Aorta (tissue), 5 donors: ENCODE measurements at regions of chr6 and their contacts with region 1.

Region 1: GRCh38 chr6:43506667-43507471 is 3.3 kb downstream of the LRRC73 start:
- DNase-seq: peak; percentile 74 to 90
- ATAC-seq: peak; percentile 76
- H3K4me3 ChIP-seq: no peak overlapping the region
- H3K27ac ChIP-seq: no peak overlapping the region
- H3K4me1 ChIP-seq: no peaks in the 10 kb centered on the region
- H3K27me3 ChIP-seq: no peaks in the 10 kb centered on the region

Region 2: DNA sequence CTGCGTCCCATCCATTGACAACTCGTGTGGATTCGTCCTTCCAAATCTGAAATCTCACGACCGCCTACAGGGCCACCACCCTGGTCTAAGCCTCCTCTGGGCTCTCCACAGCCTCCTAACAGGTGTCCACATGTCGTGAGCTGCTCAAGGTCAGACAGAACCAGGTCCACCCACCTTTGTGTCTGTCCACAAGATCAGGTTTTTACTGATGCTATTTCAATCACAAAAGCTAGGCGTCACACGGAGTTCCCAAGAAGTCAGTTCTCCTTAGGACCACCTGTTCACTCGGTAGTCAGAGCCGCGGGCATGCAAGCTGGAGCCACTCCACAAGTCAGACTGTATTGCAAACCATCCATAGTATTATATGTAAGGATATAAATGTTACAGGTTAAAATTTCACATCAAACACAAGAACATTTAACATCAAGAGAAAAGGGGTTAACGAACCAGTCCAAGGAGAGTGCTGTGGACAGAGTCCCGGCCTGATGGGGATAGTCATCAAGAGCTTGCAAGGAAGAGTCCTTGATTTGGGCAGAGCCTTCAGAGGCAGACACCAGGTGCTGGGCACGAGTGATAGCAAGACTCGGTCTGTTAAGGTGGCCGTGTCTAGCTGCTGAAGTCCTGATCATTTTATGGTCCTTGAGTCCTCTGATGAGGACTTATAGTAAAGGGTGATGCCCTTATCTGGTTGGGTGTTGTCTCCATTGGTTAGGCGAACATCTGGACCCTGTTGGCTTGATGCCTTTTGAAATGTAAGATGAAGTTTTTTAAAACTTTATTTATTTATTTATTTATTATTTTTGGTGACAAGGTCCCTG is 276.9 kb before region 1 on chr6:
- intact Hi-C with region 1: loop called in 1 of 2 experiments (anchors 10 kb)
- DNase-seq: no peak
- ATAC-seq: no peak
- H3K4me3 ChIP-seq: no peak overlapping the region
- H3K27ac ChIP-seq: no peak overlapping the region
- H3K4me1 ChIP-seq: no peaks in the 10 kb centered on the region
- H3K27me3 ChIP-seq: no peaks in the 10 kb centered on the region

Region 3: GRCh38 chr6:43369174-43370022 is 137.5 kb before region 1 on chr6 and contains the start of gene ZNF318:
- intact Hi-C with region 1: loop called (anchors 5 kb)
- DNase-seq: peak; percentile 98
- ATAC-seq: peak; percentile 99
- H3K4me3 ChIP-seq: peak within 1 kb of the TSS; percentile 94 to 100
- H3K27ac ChIP-seq: peak within 1 kb of the TSS; percentile 52 to 71
- H3K4me1 ChIP-seq: peaks cover 0 to 3% of the 10 kb centered on the region in 2 donors
- H3K27me3 ChIP-seq: no peaks in the 10 kb centered on the region
- total RNA-seq, gene ZNF318: 12.1 to 21.3 TPM

Region 4: DNA sequence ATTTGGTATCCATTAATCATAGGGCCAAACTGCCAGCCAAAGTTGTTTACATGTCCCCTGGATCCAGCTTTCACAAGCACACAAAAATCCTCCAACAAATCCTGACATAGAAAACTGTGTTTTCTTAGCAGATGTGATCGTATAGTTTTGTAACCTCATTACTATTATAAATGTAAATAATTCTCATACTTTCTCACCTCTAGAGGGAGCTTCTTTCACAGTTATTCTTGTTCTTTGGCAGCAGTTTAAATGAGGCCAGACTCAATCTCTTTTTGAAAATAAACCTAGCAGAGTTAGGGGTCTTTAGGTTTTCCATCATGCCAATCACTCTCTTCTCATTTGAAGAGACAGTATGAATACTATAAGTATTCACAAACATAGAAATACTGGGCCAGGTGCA is 120.4 kb before region 1 on chr6:
- intact Hi-C with region 1: loop called (anchors 2 to 10 kb)
- DNase-seq: no peak
- ATAC-seq: no peak
- H3K4me3 ChIP-seq: no peak overlapping the region
- H3K27ac ChIP-seq: no peak overlapping the region
- H3K4me1 ChIP-seq: no peaks in the 10 kb centered on the region
- H3K27me3 ChIP-seq: no peaks in the 10 kb centered on the region

Region 5: GRCh38 chr6:43391440-43392031 is 115.3 kb before region 1 on chr6:
- intact Hi-C with region 1: loop called (anchors 2 to 10 kb)
- DNase-seq: no peak
- ATAC-seq: no peak
- H3K4me3 ChIP-seq: no peak overlapping the region
- H3K27ac ChIP-seq: no peak overlapping the region
- H3K4me1 ChIP-seq: no peaks in the 10 kb centered on the region
- H3K27me3 ChIP-seq: no peaks in the 10 kb centered on the region

Region 6: GRCh38 chr6:43454696-43455530 is 52.0 kb before region 1 on chr6:
- intact Hi-C with region 1: loop called (anchors 1 to 2 kb)
- DNase-seq: peak; percentile 91 to 96
- ATAC-seq: peak; percentile 94
- H3K4me3 ChIP-seq: peak overlapping the region; percentile 30 to 84
- H3K27ac ChIP-seq: no peak overlapping the region
- H3K4me1 ChIP-seq: no peaks in the 10 kb centered on the region
- H3K27me3 ChIP-seq: no peaks in the 10 kb centered on the region

Region 7: GRCh38 chr6:43465948-43466347 is 40.9 kb before region 1 on chr6:
- intact Hi-C with region 1: no loop called
- DNase-seq: no peak
- ATAC-seq: no peak
- H3K4me3 ChIP-seq: no peak overlapping the region
- H3K27ac ChIP-seq: no peak overlapping the region
- H3K4me1 ChIP-seq: no peaks in the 10 kb centered on the region
- H3K27me3 ChIP-seq: no peaks in the 10 kb centered on the region

Region 8: GRCh38 chr6:43477235-43478007 is 29.4 kb before region 1 on chr6 and contains the start of gene TJAP1:
- intact Hi-C with region 1: no loop called
- DNase-seq: peak; percentile 95 to 99
- ATAC-seq: peak; percentile 99
- H3K4me3 ChIP-seq: peak within 1 kb of the TSS; percentile 72 to 92
- H3K27ac ChIP-seq: peak within 1 kb of the TSS in 1 of 2 donors; percentile 42
- H3K4me1 ChIP-seq: peaks cover 0 to 5% of the 10 kb centered on the region in 2 donors
- H3K27me3 ChIP-seq: no peaks in the 10 kb centered on the region
- total RNA-seq, gene TJAP1: 30.6 to 35.5 TPM

Region 9: GRCh38 chr6:43635387-43636307 is 128.8 kb after region 1 on chr6 and contains the start of gene MAD2L1BP:
- intact Hi-C with region 1: no loop called
- DNase-seq: peak; percentile 89 to 94
- ATAC-seq: peak; percentile 91
- H3K4me3 ChIP-seq: peak within 1 kb of the TSS; percentile 38 to 72
- H3K27ac ChIP-seq: peak within 1 kb of the TSS in 1 of 2 donors; percentile 6
- H3K4me1 ChIP-seq: peaks cover 0 to 4% of the 10 kb centered on the region in 2 donors
- H3K27me3 ChIP-seq: no peaks in the 10 kb centered on the region
- total RNA-seq, gene MAD2L1BP: 13.6 TPM